ENCODE measurements at regions of chr9 and their contacts with region 1.

Region 1: GRCh38 chr9:131678499-131679111 is 61.3 kb downstream of the RAPGEF1 start:
- DNase-seq: peak; percentile 80
- H3K4me3 ChIP-seq: no peak overlapping the region
- H3K27ac ChIP-seq: peak overlapping the region; percentile 96
- H3K4me1 ChIP-seq: peaks cover 56% of the 10 kb centered on the region
- H3K27me3 ChIP-seq: no peaks in the 10 kb centered on the region
- CTCF ChIP-seq: no peak
- POLR2A ChIP-seq: no peak

Region 2: DNA sequence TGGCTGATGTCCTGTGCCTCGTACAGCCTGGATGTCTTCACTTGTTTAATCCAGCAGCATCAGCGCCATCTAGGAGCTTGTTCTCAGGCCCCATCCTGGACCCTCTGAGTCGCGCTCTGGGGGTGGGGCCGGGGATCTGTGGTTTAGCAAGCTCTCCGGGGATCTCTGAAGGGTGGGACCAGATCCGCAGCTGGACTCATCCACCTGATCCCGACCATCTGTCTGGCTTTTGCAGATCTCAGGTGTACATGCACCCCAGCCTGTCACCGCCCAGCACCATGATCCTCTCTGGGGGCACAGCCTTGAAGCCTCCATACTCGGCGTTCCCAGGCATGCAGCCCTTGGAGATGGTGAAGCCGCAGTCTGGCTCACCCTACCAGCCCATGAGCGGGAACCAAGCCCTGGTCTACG is 191.0 kb before region 1 on chr9:
- CTCF ChIA-PET with region 1: no interaction called
- POLR2A ChIA-PET with region 1: no interaction called
- dilution Hi-C with region 1: no loop called
- intact Hi-C with region 1: no loop called
- DNase-seq: no peak
- H3K4me3 ChIP-seq: no peak overlapping the region
- H3K27ac ChIP-seq: no peak overlapping the region
- H3K4me1 ChIP-seq: no peaks in the 10 kb centered on the region
- H3K27me3 ChIP-seq: no peaks in the 10 kb centered on the region
- CTCF ChIP-seq: no peak
- POLR2A ChIP-seq: no peak

Region 3: GRCh38 chr9:131534721-131535237 is 143.8 kb before region 1 on chr9:
- CTCF ChIA-PET with region 1: no interaction called
- POLR2A ChIA-PET with region 1: no interaction called
- dilution Hi-C with region 1: no loop called
- intact Hi-C with region 1: no loop called
- DNase-seq: no peak
- H3K4me3 ChIP-seq: no peak overlapping the region
- H3K27ac ChIP-seq: no peak overlapping the region
- H3K4me1 ChIP-seq: peaks cover 4% of the 10 kb centered on the region
- H3K27me3 ChIP-seq: no peaks in the 10 kb centered on the region
- CTCF ChIP-seq: no peak
- POLR2A ChIP-seq: no peak

Region 4: GRCh38 chr9:131559421-131560000 is 119.1 kb before region 1 on chr9:
- CTCF ChIA-PET with region 1: no interaction called
- POLR2A ChIA-PET with region 1: no interaction called
- dilution Hi-C with region 1: no loop called
- intact Hi-C with region 1: no loop called
- DNase-seq: no peak
- H3K4me3 ChIP-seq: no peak overlapping the region
- H3K27ac ChIP-seq: no peak overlapping the region
- H3K4me1 ChIP-seq: no peaks in the 10 kb centered on the region
- H3K27me3 ChIP-seq: peaks cover 6 to 15% of the 10 kb centered on the region in 2 experiments
- CTCF ChIP-seq: no peak
- POLR2A ChIP-seq: no peak

Region 5: GRCh38 chr9:131590908-131591844 is 87.4 kb before region 1 on chr9:
- CTCF ChIA-PET with region 1: interaction called, 5 read pairs
- POLR2A ChIA-PET with region 1: no interaction called
- dilution Hi-C with region 1: no loop called
- intact Hi-C with region 1: loop called (anchors 2 kb)
- DNase-seq: peak; percentile 73
- H3K4me3 ChIP-seq: no peak overlapping the region
- H3K27ac ChIP-seq: no peak overlapping the region
- H3K4me1 ChIP-seq: peaks cover 13% of the 10 kb centered on the region
- H3K27me3 ChIP-seq: no peaks in the 10 kb centered on the region
- CTCF ChIP-seq: peak; percentile 72 to 90
- POLR2A ChIP-seq: no peak

Region 6: DNA sequence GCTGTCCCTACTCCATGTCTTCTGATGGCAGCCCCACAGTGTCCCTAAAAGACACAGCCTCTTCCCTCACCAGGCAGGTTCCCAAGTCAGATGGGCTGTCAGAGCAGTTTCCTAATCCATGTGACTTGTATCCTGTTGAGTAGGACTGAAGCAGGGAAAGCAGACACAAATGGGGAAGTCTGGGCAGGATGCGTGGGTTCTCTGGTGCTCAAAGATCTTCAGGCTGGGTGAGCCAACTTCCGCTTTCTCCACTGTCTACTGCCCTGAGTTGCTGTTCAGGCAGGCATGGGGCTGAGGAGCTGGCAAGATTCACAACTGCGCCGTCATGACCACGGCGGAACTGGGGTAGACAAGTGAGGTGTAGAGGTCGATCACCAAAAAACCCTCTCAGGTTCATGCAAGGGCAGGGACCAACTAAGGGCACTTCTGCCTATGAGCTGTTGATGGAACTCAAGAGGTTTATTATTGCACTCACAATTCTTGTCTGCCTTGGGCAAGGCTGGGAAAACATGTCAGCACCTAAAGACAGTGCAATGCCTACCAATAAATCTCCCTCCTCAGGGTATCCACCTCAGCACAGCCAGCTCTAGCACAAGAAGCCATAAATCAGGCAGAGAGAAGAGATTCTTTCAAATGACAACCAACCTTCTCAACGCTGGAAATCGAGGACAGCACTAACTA is 22.1 kb before region 1 on chr9:
- CTCF ChIA-PET with region 1: interaction called, 12 read pairs
- POLR2A ChIA-PET with region 1: no interaction called
- dilution Hi-C with region 1: no loop called
- intact Hi-C with region 1: loop called (anchors 1 kb)
- DNase-seq: peak; percentile 98
- H3K4me3 ChIP-seq: no peak overlapping the region
- H3K27ac ChIP-seq: peak overlapping the region; percentile 95
- H3K4me1 ChIP-seq: peaks cover 58% of the 10 kb centered on the region
- H3K27me3 ChIP-seq: no peaks in the 10 kb centered on the region
- CTCF ChIP-seq: no peak
- POLR2A ChIP-seq: no peak

Region 7: GRCh38 chr9:131709771-131710454 is 31.3 kb after region 1 on chr9:
- CTCF ChIA-PET with region 1: interaction called, 10 read pairs
- POLR2A ChIA-PET with region 1: interaction called, 8 read pairs
- dilution Hi-C with region 1: no loop called
- intact Hi-C with region 1: loop called (anchors 1 kb)
- DNase-seq: peak; percentile 83
- H3K4me3 ChIP-seq: no peak overlapping the region
- H3K27ac ChIP-seq: peak overlapping the region; percentile 79
- H3K4me1 ChIP-seq: peaks cover 55% of the 10 kb centered on the region
- H3K27me3 ChIP-seq: no peaks in the 10 kb centered on the region
- CTCF ChIP-seq: no peak
- POLR2A ChIP-seq: no peak

Region 8: GRCh38 chr9:131739980-131740648 is 61.5 kb after region 1 on chr9 and contains the start of gene RAPGEF1:
- CTCF ChIA-PET with region 1: interaction called, 16 read pairs
- POLR2A ChIA-PET with region 1: interaction called, 4 read pairs
- dilution Hi-C with region 1: no loop called
- intact Hi-C with region 1: loop called (anchors 1 kb)
- DNase-seq: no peak
- H3K4me3 ChIP-seq: peak within 1 kb of the TSS; percentile 36 to 84 (median 75)
- H3K27ac ChIP-seq: peak within 1 kb of the TSS; percentile 73
- H3K4me1 ChIP-seq: peaks cover 32% of the 10 kb centered on the region
- H3K27me3 ChIP-seq: no peaks in the 10 kb centered on the region
- CTCF ChIP-seq: peak; percentile 75 to 77
- POLR2A ChIP-seq: no peak
- total RNA-seq, gene RAPGEF1: 124 TPM in 2 replicates

Region 9: DNA sequence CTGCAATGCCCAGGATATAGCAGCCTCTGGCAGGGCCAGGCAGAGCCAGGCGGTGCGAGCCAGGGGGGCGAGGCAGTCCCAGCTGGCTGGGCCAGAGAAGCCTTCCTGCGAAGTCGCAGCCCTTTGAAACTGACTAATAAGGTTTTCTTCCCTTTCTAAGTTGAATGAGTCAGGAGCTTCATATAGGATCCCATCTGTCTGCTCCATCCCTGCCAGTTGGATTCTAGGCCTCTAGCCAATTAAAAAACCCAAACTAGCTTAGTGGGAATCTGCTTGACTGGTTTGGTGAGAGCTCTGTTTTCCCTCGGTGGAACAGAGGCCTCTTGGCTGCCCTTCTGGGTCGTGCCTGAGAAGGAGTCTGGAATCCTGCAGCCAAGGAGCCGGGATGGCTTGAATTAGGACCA is 131.3 kb after region 1 on chr9:
- CTCF ChIA-PET with region 1: no interaction called
- POLR2A ChIA-PET with region 1: no interaction called
- dilution Hi-C with region 1: no loop called
- intact Hi-C with region 1: no loop called
- DNase-seq: no peak
- H3K4me3 ChIP-seq: no peak overlapping the region
- H3K27ac ChIP-seq: no peak overlapping the region
- H3K4me1 ChIP-seq: no peaks in the 10 kb centered on the region
- H3K27me3 ChIP-seq: peaks cover 0 to 2% of the 10 kb centered on the region in 2 experiments
- CTCF ChIP-seq: no peak
- POLR2A ChIP-seq: no peak

Measured in endothelial cell of umbilical vein (primary cell).